K562 (cell line): ENCODE measurements at regions of chr12 and their contacts with region 1.

Region 1: GRCh38 chr12:121773011-121773777 is 20.3 kb downstream of the RHOF start:
- DNase-seq: peak; percentile 83 to 87 (median 86)
- ATAC-seq: peak; percentile 88
- H3K4me3 ChIP-seq: no peak overlapping the region
- H3K27ac ChIP-seq: no peak overlapping the region
- H3K4me1 ChIP-seq: peaks cover 14 to 51% of the 10 kb centered on the region in 2 experiments; a peak in 4 of 5 replicates
- H3K27me3 ChIP-seq: no peaks in the 10 kb centered on the region
- CTCF ChIP-seq: peak; percentile 95 to 97 (median 96)
- EP300 ChIP-seq: no peak
- POLR2A ChIP-seq: no peak
- RAD21 ChIP-seq: peak; percentile 94 to 98

Region 2: DNA sequence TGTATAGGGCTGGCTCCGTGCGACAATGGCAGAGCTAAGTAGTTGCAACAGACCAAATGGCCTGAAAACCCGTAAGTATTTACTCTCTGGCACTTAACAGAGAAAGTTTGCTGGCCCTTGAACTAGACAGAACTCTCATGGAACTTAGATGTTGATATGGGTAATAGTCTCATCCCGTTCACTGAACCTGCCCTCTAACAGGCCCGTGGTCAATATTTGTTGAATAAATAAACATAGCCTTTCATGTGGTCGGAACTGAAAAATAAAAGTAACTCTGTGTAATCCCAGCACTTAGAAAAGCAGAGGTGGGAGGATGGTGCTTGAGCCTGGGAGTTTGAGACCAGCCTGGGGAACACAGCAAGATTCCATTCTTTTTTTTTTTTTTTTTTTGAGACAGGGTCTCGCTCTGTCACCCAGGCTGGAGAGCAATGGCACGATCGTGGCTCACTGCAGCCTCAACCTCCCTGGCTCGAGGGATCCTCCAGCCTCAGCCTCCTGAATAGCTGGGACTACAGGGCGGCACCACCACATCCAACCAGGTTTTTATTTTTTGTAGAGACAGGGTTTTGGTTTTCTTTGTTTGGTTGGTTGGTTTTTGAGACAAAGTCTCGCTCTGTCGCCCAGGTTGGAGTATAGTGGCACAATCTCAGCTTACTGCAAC is 222.1 kb before region 1 on chr12:
- CTCF ChIA-PET with region 1: no interaction called
- POLR2A ChIA-PET with region 1: no interaction called
- in situ Hi-C with region 1: no loop called
- intact Hi-C with region 1: no loop called
- DNase-seq: no peak
- ATAC-seq: no peak
- H3K4me3 ChIP-seq: no peak overlapping the region
- H3K27ac ChIP-seq: no peak overlapping the region
- H3K4me1 ChIP-seq: peaks cover 0 to 7% of the 10 kb centered on the region in 2 experiments; a peak in 1 of 5 replicates
- H3K27me3 ChIP-seq: no peaks in the 10 kb centered on the region
- CTCF ChIP-seq: no peak
- EP300 ChIP-seq: no peak
- POLR2A ChIP-seq: no peak
- RAD21 ChIP-seq: no peak

Region 3: GRCh38 chr12:121697098-121697698 is 76.0 kb before region 1 on chr12:
- CTCF ChIA-PET with region 1: interaction called, 82 read pairs
- POLR2A ChIA-PET with region 1: no interaction called
- in situ Hi-C with region 1: loop called (anchors 5 kb)
- intact Hi-C with region 1: loop called (anchors 1 kb)
- DNase-seq: peak; percentile 35 to 65 (median 40)
- ATAC-seq: 0 out of 3 replicates have a peak, but pooled peaks have one; percentile 26
- H3K4me3 ChIP-seq: no peak overlapping the region
- H3K27ac ChIP-seq: no peak overlapping the region
- H3K4me1 ChIP-seq: no peaks in the 10 kb centered on the region; a peak in 1 of 5 replicates
- H3K27me3 ChIP-seq: no peaks in the 10 kb centered on the region
- CTCF ChIP-seq: peak; percentile 47 to 75 (median 49); a peak in 5 of 6 replicates
- EP300 ChIP-seq: no peak
- POLR2A ChIP-seq: no peak
- RAD21 ChIP-seq: peak; percentile 92 to 94

Region 4: GRCh38 chr12:121811434-121812319 is 38.5 kb after region 1 on chr12:
- CTCF ChIA-PET with region 1: interaction called, 5 read pairs
- POLR2A ChIA-PET with region 1: no interaction called
- in situ Hi-C with region 1: no loop called
- intact Hi-C with region 1: loop called (anchors 1 kb)
- DNase-seq: peak; percentile 75 to 85 (median 82)
- ATAC-seq: peak; percentile 94
- H3K4me3 ChIP-seq: peak overlapping the region; percentile 53
- H3K27ac ChIP-seq: peak overlapping the region; percentile 31
- H3K4me1 ChIP-seq: peaks cover 27 to 59% of the 10 kb centered on the region in 2 experiments
- H3K27me3 ChIP-seq: no peaks in the 10 kb centered on the region
- CTCF ChIP-seq: peak; percentile 86 to 97 (median 91)
- EP300 ChIP-seq: no peak
- POLR2A ChIP-seq: no peak
- RAD21 ChIP-seq: peak; percentile 92 to 93

Region 5: GRCh38 chr12:121899590-121899989 is 126.4 kb after region 1 on chr12:
- CTCF ChIA-PET with region 1: no interaction called
- POLR2A ChIA-PET with region 1: no interaction called
- in situ Hi-C with region 1: no loop called
- intact Hi-C with region 1: no loop called
- DNase-seq: no peak
- ATAC-seq: no peak
- H3K4me3 ChIP-seq: no peak overlapping the region
- H3K27ac ChIP-seq: peak overlapping the region; percentile 23; the same call in 1 of the 3 replicates
- H3K4me1 ChIP-seq: peaks cover 0 to 3% of the 10 kb centered on the region in 2 experiments; a peak in 3 of 5 replicates
- H3K27me3 ChIP-seq: no peaks in the 10 kb centered on the region
- CTCF ChIP-seq: no peak
- EP300 ChIP-seq: no peak
- POLR2A ChIP-seq: no peak
- RAD21 ChIP-seq: no peak

Region 6: DNA sequence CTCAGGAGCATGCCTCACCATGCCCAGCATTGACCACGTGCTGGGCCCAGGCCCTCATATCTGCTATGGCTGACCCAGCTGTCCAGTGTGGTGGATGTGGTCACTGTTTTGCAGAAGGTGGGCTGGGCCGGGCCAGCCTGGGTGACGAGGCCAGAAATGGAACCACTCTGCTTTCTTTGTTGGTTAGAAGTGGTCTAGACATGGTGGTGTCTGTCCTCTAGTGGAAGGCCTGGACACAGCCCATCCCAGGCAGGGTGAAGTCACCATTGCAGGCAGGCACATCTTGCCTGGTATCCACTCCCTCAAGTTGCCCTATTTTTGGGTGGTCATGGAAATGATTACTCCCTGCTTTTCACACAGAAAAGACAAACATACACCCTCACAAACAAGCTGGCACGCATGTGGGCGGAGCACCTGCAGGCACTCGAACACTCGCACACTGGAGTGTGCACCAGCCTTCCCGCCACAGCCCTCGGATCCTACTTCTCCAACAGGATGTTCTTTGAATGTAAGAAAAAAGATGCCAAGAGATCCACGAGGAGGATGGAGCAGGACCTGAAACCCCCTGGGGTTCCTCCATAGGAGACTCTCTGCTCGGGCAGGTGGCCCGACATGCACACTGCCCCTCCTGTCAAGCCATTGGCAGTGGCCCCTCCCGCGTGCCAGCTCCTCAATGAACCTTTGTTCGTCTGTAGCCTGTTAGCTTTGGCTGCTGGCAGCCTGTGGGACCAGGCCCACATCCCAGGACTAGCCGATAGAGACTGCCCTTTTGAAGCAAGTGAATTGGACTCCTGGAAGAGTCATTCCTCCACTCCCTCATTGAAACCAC is 343.7 kb after region 1 on chr12:
- CTCF ChIA-PET with region 1: no interaction called
- POLR2A ChIA-PET with region 1: no interaction called
- in situ Hi-C with region 1: no loop called
- intact Hi-C with region 1: no loop called
- DNase-seq: no peak
- ATAC-seq: peak; percentile 70
- H3K4me3 ChIP-seq: no peak overlapping the region
- H3K27ac ChIP-seq: no peak overlapping the region; the same call in 2 of the 3 replicates
- H3K4me1 ChIP-seq: peaks cover 15 to 17% of the 10 kb centered on the region in 2 experiments; a peak in 4 of 5 replicates
- H3K27me3 ChIP-seq: no peaks in the 10 kb centered on the region
- CTCF ChIP-seq: peak; percentile 20 to 50 (median 47); a peak in 4 of 6 replicates
- EP300 ChIP-seq: no peak
- POLR2A ChIP-seq: no peak
- RAD21 ChIP-seq: peak; percentile 40 to 55